Posterior cingulate gyrus (tissue), 11 donors: ENCODE measurements at regions of chr19 and their contacts with region 1.

Region 1: DNA sequence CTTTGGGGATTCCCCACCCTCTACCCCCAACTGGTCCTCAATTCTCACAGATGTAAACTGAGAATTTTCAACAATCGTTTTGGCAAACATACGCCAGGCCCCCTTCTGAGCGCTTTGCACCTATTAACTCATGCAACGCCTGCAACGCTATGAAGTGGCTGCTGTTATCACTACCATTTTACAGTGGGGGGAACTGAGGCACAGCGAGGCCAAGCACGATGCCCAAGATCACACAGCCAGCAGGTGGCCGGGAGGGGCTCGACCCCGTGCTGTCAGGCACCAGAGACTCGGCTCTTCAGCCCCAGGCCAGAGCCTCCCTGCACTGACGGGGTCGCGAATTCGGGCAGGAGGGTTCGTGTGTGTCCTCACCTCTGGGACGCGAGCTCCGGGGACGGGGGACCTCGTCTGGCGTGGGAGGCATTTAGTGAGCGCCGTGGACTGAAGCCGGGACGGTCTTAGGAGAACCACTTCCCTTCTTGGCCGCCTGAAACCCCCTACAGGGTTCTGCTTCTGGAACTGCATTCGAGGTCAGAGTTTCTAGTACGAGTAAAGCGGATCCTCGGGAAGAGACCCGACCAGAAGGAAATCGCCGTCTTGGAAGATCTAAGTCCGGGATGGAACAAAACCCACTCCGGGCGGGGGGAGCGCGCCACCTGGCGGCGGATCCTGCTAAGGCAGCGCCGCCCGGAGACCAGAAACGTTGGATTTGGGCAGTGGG is 21.0 kb downstream of the ZNF114 start:
- DNase-seq: peak; percentile 54 to 96 (median 78)

Region 2: GRCh38 chr19:47550129-47550528 is 740.8 kb before region 1 on chr19:
- intact Hi-C with region 1: no loop called
- DNase-seq: peak in 1 of 10 donors; percentile 6

Region 3: GRCh38 chr19:48271531-48272151 is 19.3 kb before region 1 on chr19:
- intact Hi-C with region 1: loop called (anchors 1 kb)
- DNase-seq: peak in 7 of 10 donors; percentile 20 to 89 (median 41)